Caco-2 (cell line): ENCODE measurements at regions of chr1 and their contacts with region 1.

Region 1: DNA sequence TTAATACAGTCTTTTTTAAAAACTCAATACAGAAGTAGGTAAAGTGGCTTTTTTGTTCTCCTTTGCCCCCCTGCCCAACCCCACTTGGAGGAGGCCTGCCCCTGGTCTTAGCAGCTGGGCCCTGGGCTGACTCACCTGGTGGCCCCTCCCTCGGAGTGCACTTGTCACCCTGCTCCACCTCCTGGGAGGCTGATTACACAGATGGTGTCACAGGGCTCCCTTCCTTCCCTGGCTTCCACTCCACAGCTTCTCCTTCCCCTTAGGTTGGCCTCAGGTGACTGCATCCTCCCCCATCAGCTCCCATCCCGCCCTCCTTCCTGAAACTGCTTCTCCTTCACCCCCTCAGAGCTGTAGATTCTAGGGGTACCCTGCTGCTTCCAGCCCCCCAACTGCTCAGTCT is 11.7 kb upstream of the CAPN9 start:
- DNase-seq: peak; percentile 57 to 64
- H3K4me3 ChIP-seq: no peak overlapping the region
- H3K4me3 Mint-ChIP-seq: no peak overlapping the region
- H3K27ac Mint-ChIP-seq: no peak overlapping the region
- H3K4me1 ChIP-seq: no peaks in the 10 kb centered on the region
- H3K4me1 Mint-ChIP-seq: peaks cover 7% of the 10 kb centered on the region
- H3K27me3 ChIP-seq: no peaks in the 10 kb centered on the region
- H3K27me3 Mint-ChIP-seq: no peaks in the 10 kb centered on the region
- CTCF ChIP-seq: no peak

Region 2: DNA sequence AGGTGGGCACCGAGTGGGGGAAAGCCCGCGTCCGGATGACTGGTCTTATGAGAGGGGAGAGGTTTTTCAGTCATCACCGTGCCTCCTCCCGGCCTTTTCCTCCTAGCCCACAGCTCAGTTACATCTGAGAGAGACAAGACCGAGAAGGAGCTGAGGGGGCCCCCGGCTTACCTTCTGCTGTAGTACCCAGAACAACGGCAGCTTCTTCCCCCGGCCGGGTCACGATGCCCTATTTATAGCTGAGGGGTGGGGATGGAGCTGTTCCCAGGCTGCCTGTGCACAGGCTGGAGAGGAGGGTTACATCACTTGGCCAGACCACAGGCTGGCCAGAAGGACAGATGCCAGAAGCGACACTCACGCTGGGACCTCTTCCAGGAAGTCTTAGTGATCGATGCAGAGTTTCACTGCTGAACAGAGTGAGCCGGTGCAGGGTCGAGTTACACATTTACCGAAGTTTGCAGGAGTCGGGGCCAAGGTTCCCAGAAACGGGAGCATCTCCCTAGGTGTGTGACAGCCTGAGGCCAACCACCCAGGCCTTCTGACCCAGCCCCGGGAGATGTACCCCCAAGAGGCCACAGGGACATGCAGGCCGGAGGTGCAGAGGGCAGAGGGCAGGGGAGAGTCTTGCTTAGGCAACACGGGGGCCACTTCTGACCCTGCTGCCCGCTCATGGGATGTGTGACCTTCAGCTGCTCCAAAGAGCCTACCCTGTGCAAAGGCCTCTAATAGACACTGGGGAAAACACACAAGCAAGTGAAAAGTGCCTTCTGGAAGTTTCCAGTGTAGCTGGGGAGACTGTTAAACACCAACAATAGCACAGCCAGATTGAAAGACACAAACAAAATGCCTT is 21.3 kb before region 1 on chr1 and contains the start of gene AGT:
- CTCF ChIA-PET with region 1: no interaction called
- POLR2A ChIA-PET with region 1: no interaction called
- intact Hi-C with region 1: loop called (anchors 2 kb)
- DNase-seq: peak; percentile 49 to 80
- H3K4me3 ChIP-seq: peak within 1 kb of the TSS; percentile 32
- H3K4me3 Mint-ChIP-seq: peak within 1 kb of the TSS; percentile 66
- H3K27ac Mint-ChIP-seq: peak within 1 kb of the TSS; percentile 73
- H3K4me1 ChIP-seq: peaks cover 40% of the 10 kb centered on the region
- H3K4me1 Mint-ChIP-seq: peaks cover 22% of the 10 kb centered on the region
- H3K27me3 ChIP-seq: no peaks in the 10 kb centered on the region
- H3K27me3 Mint-ChIP-seq: no peaks in the 10 kb centered on the region
- CTCF ChIP-seq: no peak
- total RNA-seq, gene AGT: 38.6 and 41.9 TPM in 2 replicates